ENCODE measurements at regions of chr10 and their contacts with region 1.

Region 1: DNA sequence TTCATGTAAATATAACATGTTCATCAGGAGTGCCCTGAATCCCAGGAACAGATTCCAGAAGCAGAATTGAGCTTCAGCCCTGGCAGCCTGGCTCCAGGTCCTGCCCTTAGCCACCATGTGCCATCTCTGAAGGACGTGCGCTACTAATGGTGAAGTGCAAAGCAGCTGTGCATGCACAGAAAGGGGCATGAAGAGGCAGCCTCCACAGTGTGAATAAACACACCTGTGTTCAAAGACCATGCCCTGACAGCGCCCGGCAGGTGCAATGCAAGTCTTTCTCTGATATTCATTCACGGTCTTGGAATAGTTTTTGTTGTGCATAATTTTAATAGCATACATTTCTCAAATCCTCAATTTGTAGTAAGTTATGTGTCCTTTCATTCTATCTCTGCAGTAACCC is 250.4 kb upstream of the TCERG1L start:
- DNase-seq: no peak
- ATAC-seq: no peak
- H3K4me3 ChIP-seq: no peak overlapping the region
- H3K27ac ChIP-seq: no peak overlapping the region
- H3K4me1 ChIP-seq: no peaks in the 10 kb centered on the region
- H3K27me3 ChIP-seq: 0 out of 2 replicates have a peak, but pooled peaks cover 13% of the 10 kb centered on the region
- CTCF ChIP-seq: no peak
- POLR2A ChIP-seq: no peak
- RAD21 ChIP-seq: no peak

Region 2: GRCh38 chr10:131480861-131481260 is 81.0 kb before region 1 on chr10:
- CTCF ChIA-PET with region 1: no interaction called
- POLR2A ChIA-PET with region 1: no interaction called
- RAD21 ChIA-PET with region 1: no interaction called
- intact Hi-C with region 1: no loop called
- DNase-seq: no peak
- ATAC-seq: no peak
- H3K4me3 ChIP-seq: no peak overlapping the region
- H3K27ac ChIP-seq: no peak overlapping the region
- H3K4me1 ChIP-seq: no peaks in the 10 kb centered on the region
- H3K27me3 ChIP-seq: no peaks in the 10 kb centered on the region
- CTCF ChIP-seq: no peak
- POLR2A ChIP-seq: no peak
- RAD21 ChIP-seq: no peak

Region 3: GRCh38 chr10:131546086-131546810 is 15.6 kb before region 1 on chr10:
- CTCF ChIA-PET with region 1: no interaction called
- POLR2A ChIA-PET with region 1: no interaction called
- RAD21 ChIA-PET with region 1: no interaction called
- intact Hi-C with region 1: no loop called
- DNase-seq: peak; percentile 53
- ATAC-seq: peak; percentile 97
- H3K4me3 ChIP-seq: no peak overlapping the region
- H3K27ac ChIP-seq: no peak overlapping the region
- H3K4me1 ChIP-seq: peaks cover 0 to 7% of the 10 kb centered on the region in 2 experiments; a peak in 3 of 4 replicates
- H3K27me3 ChIP-seq: peaks cover 12% of the 10 kb centered on the region
- CTCF ChIP-seq: no peak
- POLR2A ChIP-seq: no peak
- RAD21 ChIP-seq: no peak

Region 4: GRCh38 chr10:131786756-131787605 is 225.1 kb after region 1 on chr10:
- CTCF ChIA-PET with region 1: no interaction called
- POLR2A ChIA-PET with region 1: no interaction called
- RAD21 ChIA-PET with region 1: no interaction called
- intact Hi-C with region 1: loop called (anchors 5 kb)
- DNase-seq: peak; percentile 8
- ATAC-seq: 0 out of 2 replicates have a peak, but pooled peaks have one; percentile 38
- H3K4me3 ChIP-seq: no peak overlapping the region
- H3K27ac ChIP-seq: no peak overlapping the region
- H3K4me1 ChIP-seq: no peaks in the 10 kb centered on the region
- H3K27me3 ChIP-seq: no peaks in the 10 kb centered on the region
- CTCF ChIP-seq: peak; percentile 35 to 62 (median 40); a peak in 4 of 6 replicates
- POLR2A ChIP-seq: no peak
- RAD21 ChIP-seq: peak; percentile 52

Region 5: GRCh38 chr10:131981429-131982184 is 419.7 kb after region 1 on chr10 and contains the start of gene BNIP3:
- CTCF ChIA-PET with region 1: no interaction called
- POLR2A ChIA-PET with region 1: no interaction called
- RAD21 ChIA-PET with region 1: no interaction called
- intact Hi-C with region 1: no loop called
- DNase-seq: peak; percentile 39
- ATAC-seq: peak; percentile 95
- H3K4me3 ChIP-seq: peak within 1 kb of the TSS; percentile 62 to 65
- H3K27ac ChIP-seq: peak within 1 kb of the TSS; percentile 38; the same call in 1 of the 2 replicates
- H3K4me1 ChIP-seq: peaks cover 0 to 5% of the 10 kb centered on the region in 2 experiments; a peak in 2 of 4 replicates
- H3K27me3 ChIP-seq: no peaks in the 10 kb centered on the region
- CTCF ChIP-seq: no peak
- POLR2A ChIP-seq: peak; percentile 37
- RAD21 ChIP-seq: no peak
- total RNA-seq, gene BNIP3: 37.5 TPM